PC-9 (cell line): ENCODE measurements at regions of chr1 and their contacts with region 1.

Region 1: DNA sequence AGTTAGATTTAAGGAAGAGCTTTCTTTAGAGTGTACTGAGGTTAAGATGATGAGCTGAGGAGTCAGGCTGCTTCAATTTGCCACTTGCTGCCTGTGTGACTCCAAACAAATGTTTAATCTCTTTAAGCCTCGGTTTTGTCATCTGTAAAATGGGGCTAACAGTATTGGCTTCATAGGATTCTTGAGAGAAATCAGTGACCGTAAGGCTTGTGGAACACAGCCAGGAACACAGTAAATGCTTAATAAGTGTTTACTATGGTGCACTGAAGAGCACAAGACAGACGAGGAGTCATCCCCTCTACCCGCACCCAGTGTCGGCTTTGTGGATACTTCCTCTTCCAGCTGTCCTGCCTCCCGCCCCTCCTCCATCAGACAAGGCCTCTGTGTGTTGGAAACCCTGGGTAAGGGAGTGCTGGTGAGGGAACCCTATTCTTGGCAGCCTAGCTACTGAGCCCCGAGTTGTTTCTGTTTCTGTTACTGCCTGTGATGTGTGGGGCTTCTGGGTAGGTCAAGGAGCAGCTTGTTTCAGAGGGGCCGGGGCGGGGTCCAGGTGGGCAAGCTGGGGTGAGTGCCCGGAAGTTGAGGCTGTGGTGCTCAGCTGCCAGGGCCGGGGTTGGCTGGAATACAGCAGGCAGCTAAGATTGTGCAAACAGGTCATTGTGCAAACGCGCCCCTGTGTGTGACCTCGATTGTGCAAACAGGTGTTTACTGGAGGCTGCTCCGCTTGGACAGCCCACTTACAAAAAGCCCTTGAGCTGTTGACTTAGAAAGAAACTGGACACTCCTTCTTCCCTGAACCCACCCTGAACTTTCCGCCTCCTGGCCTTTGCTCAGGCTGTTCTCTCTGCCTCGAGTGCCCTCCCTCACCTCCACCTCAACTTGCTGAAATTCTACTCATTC is 4.0 kb upstream of the CSF3R start:
- DNase-seq: peak; percentile 90 to 97
- H3K4me3 ChIP-seq: peak overlapping the region; percentile 34; the same call in 1 of the 2 replicates
- H3K27ac ChIP-seq: peak overlapping the region; percentile 90
- H3K4me1 ChIP-seq: peaks cover 34% of the 10 kb centered on the region
- H3K27me3 ChIP-seq: no peaks in the 10 kb centered on the region
- CTCF ChIP-seq: no peak

Region 2: GRCh38 chr1:36248250-36248894 is 238.3 kb before region 1 on chr1:
- CTCF ChIA-PET with region 1: no interaction called
- POLR2A ChIA-PET with region 1: interaction called, 29 read pairs
- intact Hi-C with region 1: no loop called
- DNase-seq: peak; percentile 79 to 88
- H3K4me3 ChIP-seq: no peak overlapping the region
- H3K27ac ChIP-seq: peak overlapping the region; percentile 90
- H3K4me1 ChIP-seq: peaks cover 66% of the 10 kb centered on the region
- H3K27me3 ChIP-seq: no peaks in the 10 kb centered on the region
- CTCF ChIP-seq: no peak

Region 3: DNA sequence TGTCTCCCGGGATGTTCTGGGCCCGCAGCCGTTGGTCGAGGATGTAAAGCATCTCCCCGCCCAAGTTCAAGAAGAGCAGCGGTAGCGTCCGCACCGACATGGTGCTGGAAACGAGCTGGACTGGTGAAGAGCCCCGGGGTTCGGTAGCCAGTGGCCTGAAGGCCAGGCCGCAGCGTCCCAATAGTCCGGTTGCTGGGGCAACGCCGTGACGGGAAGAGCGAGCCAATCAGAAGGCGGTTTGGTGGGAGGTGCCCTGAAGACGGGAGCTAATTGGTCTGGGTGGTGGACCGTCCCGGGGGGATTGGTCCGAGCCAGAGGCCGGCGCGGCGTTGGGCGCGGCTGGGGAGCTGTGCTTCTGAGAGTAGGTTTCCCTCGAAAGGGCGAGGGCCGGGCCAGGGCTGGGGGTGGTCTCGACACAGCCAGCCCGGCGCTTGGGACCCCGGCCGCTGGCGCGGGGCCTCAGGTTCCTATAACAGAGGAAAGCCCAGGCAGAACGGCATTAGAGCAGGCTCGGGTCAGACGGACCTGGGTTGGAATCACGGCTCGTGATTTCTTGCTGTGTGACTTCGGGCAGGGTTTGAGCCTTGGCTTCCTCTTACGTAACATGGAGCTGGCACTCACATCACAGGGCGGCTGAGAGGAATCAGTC is 36.3 kb before region 1 on chr1 and contains the start of gene OSCP1:
- CTCF ChIA-PET with region 1: no interaction called
- POLR2A ChIA-PET with region 1: interaction called, 12 read pairs
- intact Hi-C with region 1: loop called (anchors 1 kb)
- DNase-seq: peak; percentile 89 to 98
- H3K4me3 ChIP-seq: peak within 1 kb of the TSS; percentile 87
- H3K27ac ChIP-seq: peak within 1 kb of the TSS; percentile 73
- H3K4me1 ChIP-seq: no peaks in the 10 kb centered on the region
- H3K27me3 ChIP-seq: no peaks in the 10 kb centered on the region
- CTCF ChIP-seq: no peak; the same call in 1 of the 2 replicates
- total RNA-seq, gene OSCP1: 21.6 and 25.7 TPM in 2 replicates

Region 4: GRCh38 chr1:36523850-36524249 is 37.2 kb after region 1 on chr1:
- CTCF ChIA-PET with region 1: no interaction called
- POLR2A ChIA-PET with region 1: no interaction called
- intact Hi-C with region 1: no loop called
- DNase-seq: no peak
- H3K4me3 ChIP-seq: no peak overlapping the region
- H3K27ac ChIP-seq: no peak overlapping the region
- H3K4me1 ChIP-seq: no peaks in the 10 kb centered on the region
- H3K27me3 ChIP-seq: no peaks in the 10 kb centered on the region
- CTCF ChIP-seq: no peak

Region 5: GRCh38 chr1:36585569-36586548 is 99.2 kb after region 1 on chr1:
- CTCF ChIA-PET with region 1: no interaction called
- POLR2A ChIA-PET with region 1: no interaction called
- intact Hi-C with region 1: no loop called
- DNase-seq: no peak
- H3K4me3 ChIP-seq: no peak overlapping the region
- H3K27ac ChIP-seq: no peak overlapping the region
- H3K4me1 ChIP-seq: no peaks in the 10 kb centered on the region
- H3K27me3 ChIP-seq: peaks cover 73% of the 10 kb centered on the region
- CTCF ChIP-seq: no peak